HEK293 (cell line): ENCODE measurements at regions of chr4 and their contacts with region 1.

Region 1: DNA sequence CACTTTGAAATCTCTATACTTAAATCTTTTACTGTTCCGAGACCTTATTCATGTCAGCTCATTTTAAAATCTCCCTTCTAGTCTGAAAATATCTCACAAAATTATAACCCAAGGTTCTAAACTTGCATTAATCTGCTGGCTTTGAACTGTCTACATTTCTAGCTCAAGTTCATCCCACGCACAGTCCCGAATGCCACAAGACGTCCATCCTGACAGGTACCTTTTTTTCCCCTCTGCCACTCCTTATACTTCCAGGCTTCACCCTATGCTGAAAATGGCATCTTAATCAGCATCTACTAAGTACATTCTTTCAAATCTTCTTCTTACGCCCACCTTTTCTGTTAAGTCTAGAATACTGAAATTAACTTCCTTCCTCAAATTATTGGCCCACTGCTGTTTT is 259.2 kb upstream of the GALNTL6 start:
- H3K4me3 ChIP-seq: no peak overlapping the region
- H3K27ac ChIP-seq: no peak overlapping the region
- H3K4me1 ChIP-seq: no peaks in the 10 kb centered on the region
- CTCF ChIP-seq: no peak

Region 2: DNA sequence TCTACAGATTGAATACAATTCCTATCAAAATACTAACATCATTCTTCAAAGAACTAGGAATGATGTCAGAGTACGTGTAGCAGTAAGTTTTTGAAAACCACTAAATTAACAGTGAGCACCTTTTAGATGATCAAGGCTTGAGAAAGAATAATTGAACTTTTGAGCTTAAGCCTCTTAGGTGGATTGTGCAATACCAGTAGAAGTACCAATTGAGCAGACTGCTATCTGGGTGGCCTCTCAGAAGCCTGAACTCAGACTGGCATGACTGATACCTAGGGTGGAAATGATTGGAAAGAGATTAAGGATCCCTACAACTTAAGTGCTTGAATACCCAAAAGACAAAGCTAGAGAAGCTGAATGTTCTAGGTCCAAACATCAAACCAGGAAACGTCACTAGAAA is 58.9 kb after region 1 on chr4:
- CTCF ChIA-PET with region 1: interaction called, 10 read pairs
- POLR2A ChIA-PET with region 1: no interaction called
- H3K4me3 ChIP-seq: no peak overlapping the region
- H3K27ac ChIP-seq: no peak overlapping the region
- H3K4me1 ChIP-seq: no peaks in the 10 kb centered on the region
- CTCF ChIP-seq: no peak